ENCODE measurements at regions of chr2 and their contacts with region 1.

Region 1: GRCh38 chr2:54013996-54014395 is 43.2 kb upstream of the PSME4 start:
- DNase-seq: no peak
- ATAC-seq: no peak
- H3K4me3 Mint-ChIP-seq: peak overlapping the region; percentile 56
- H3K27ac Mint-ChIP-seq: peak overlapping the region; percentile 77
- H3K4me1 Mint-ChIP-seq: peaks cover 49% of the 10 kb centered on the region
- H3K27me3 Mint-ChIP-seq: no peaks in the 10 kb centered on the region
- CTCF ChIP-seq: no peak

Region 2: GRCh38 chr2:53417385-53417784 is 596.6 kb before region 1 on chr2:
- CTCF ChIA-PET with region 1: no interaction called
- POLR2A ChIA-PET with region 1: no interaction called
- intact Hi-C with region 1: no loop called
- DNase-seq: no peak
- ATAC-seq: no peak
- H3K4me3 Mint-ChIP-seq: no peak overlapping the region
- H3K27ac Mint-ChIP-seq: no peak overlapping the region
- H3K4me1 Mint-ChIP-seq: no peaks in the 10 kb centered on the region
- H3K27me3 Mint-ChIP-seq: no peaks in the 10 kb centered on the region
- CTCF ChIP-seq: no peak

Region 3: GRCh38 chr2:54048117-54048785 is 34.3 kb after region 1 on chr2:
- CTCF ChIA-PET with region 1: no interaction called
- POLR2A ChIA-PET with region 1: no interaction called
- intact Hi-C with region 1: loop called (anchors 5 kb)
- DNase-seq: no peak
- ATAC-seq: peak; percentile 34
- H3K4me3 Mint-ChIP-seq: no peak overlapping the region
- H3K27ac Mint-ChIP-seq: no peak overlapping the region
- H3K4me1 Mint-ChIP-seq: peaks cover 25% of the 10 kb centered on the region
- H3K27me3 Mint-ChIP-seq: no peaks in the 10 kb centered on the region
- CTCF ChIP-seq: no peak